ENCODE measurements at regions of chr11 and their contacts with region 1.

Region 1: GRCh38 chr11:118046051-118046963 is 30.6 kb upstream of the TMPRSS4 start:
- DNase-seq: no peak
- ATAC-seq: peak; percentile 65
- H3K4me3 ChIP-seq: no peak overlapping the region
- H3K27ac ChIP-seq: no peak overlapping the region
- H3K4me1 ChIP-seq: peaks cover 0 to 9% of the 10 kb centered on the region in 2 experiments; a peak in 3 of 5 replicates
- H3K27me3 ChIP-seq: no peaks in the 10 kb centered on the region
- CTCF ChIP-seq: no peak
- EP300 ChIP-seq: no peak
- POLR2A ChIP-seq: no peak
- RAD21 ChIP-seq: no peak

Region 2: DNA sequence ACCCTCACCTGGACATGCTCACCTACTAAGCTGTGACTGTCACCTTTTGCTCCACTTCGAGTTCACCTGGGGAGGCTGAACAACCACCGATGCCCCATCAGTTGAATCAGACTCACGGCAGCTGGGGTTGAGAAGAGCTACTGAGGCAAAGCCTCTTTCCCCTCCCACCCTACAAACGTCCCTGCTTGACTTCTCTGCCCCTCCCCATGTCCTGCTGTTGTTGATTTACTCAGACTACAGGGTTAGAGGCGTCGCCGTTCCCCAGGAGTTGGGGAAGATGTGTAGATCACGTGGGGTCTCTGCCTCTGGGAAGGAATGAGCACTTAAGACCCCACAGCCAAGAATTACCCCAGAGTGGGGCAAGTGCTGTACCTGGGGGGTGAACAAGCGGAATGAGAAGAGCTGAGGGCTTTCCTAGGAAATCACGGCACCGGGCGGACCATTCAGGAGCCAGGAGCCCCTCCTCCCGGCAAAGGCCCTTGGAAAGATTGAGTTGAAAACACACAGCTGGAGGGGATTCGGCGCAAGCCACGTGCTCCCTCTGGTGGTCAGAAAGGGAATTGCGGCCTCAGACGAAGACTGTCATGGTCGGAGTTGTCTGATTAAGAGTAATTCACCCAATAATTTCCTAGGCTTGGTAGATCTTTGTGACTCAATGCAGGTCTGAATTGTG is 228.8 kb before region 1 on chr11:
- CTCF ChIA-PET with region 1: interaction called, 35 read pairs
- POLR2A ChIA-PET with region 1: no interaction called
- in situ Hi-C with region 1: loop called (anchors 5 kb)
- intact Hi-C with region 1: no loop called
- DNase-seq: peak; percentile 65 to 78 (median 76)
- ATAC-seq: peak; percentile 84
- H3K4me3 ChIP-seq: no peak overlapping the region
- H3K27ac ChIP-seq: no peak overlapping the region
- H3K4me1 ChIP-seq: peaks cover 0 to 30% of the 10 kb centered on the region in 2 experiments; a peak in 3 of 5 replicates
- H3K27me3 ChIP-seq: peaks cover 3 to 13% of the 10 kb centered on the region in 2 experiments; a peak in 3 of 5 replicates
- CTCF ChIP-seq: peak; percentile 86 to 99 (median 97)
- EP300 ChIP-seq: no peak
- POLR2A ChIP-seq: no peak
- RAD21 ChIP-seq: peak; percentile 75 to 88

Region 3: GRCh38 chr11:118068206-118068944 is 22.1 kb after region 1 on chr11:
- CTCF ChIA-PET with region 1: no interaction called
- POLR2A ChIA-PET with region 1: no interaction called
- in situ Hi-C with region 1: no loop called
- intact Hi-C with region 1: no loop called
- DNase-seq: peak; percentile 62 to 73 (median 63)
- ATAC-seq: peak; percentile 93
- H3K4me3 ChIP-seq: no peak overlapping the region
- H3K27ac ChIP-seq: no peak overlapping the region
- H3K4me1 ChIP-seq: peaks cover 12 to 15% of the 10 kb centered on the region in 2 experiments; a peak in 4 of 5 replicates
- H3K27me3 ChIP-seq: peaks cover 6 to 16% of the 10 kb centered on the region in 2 experiments; a peak in 4 of 5 replicates
- CTCF ChIP-seq: peak; percentile 74 to 83 (median 79)
- EP300 ChIP-seq: no peak
- POLR2A ChIP-seq: no peak
- RAD21 ChIP-seq: peak; percentile 43 to 78; a peak in 3 of 4 replicates

Region 4: DNA sequence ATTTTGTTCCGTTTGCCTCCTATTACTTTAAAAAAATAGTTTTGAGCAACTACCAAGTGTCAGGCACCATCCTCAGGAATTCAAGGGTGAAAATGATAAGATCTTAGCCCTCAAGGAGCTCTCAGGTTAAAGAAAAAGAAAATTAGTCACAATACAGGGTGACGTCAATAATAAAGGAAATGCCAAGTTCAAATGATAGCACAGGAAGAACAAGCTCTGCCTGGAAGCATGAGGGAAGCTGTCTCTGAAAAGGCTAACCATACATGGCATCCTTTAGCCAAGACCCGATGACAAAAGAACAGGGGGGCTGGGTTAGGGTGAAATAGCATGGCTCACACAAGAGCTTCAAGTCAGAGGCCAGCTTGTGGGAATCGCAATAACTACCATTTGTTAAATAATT is 228.9 kb after region 1 on chr11:
- CTCF ChIA-PET with region 1: no interaction called
- POLR2A ChIA-PET with region 1: no interaction called
- in situ Hi-C with region 1: no loop called
- intact Hi-C with region 1: no loop called
- DNase-seq: no peak
- ATAC-seq: no peak
- H3K4me3 ChIP-seq: no peak overlapping the region
- H3K27ac ChIP-seq: no peak overlapping the region
- H3K4me1 ChIP-seq: no peaks in the 10 kb centered on the region
- H3K27me3 ChIP-seq: peaks cover 7 to 13% of the 10 kb centered on the region in 2 experiments; a peak in 4 of 5 replicates
- CTCF ChIP-seq: no peak
- EP300 ChIP-seq: no peak
- POLR2A ChIP-seq: no peak
- RAD21 ChIP-seq: no peak

Measured in K562 (cell line).